Posterior cingulate gyrus (tissue), 11 donors: ENCODE measurements at regions of chr20 and their contacts with region 1.

Region 1: GRCh38 chr20:543369-544152 is at the start of gene CSNK2A1:
- DNase-seq: peak; percentile 91 to 99 (median 94)

Region 2: DNA sequence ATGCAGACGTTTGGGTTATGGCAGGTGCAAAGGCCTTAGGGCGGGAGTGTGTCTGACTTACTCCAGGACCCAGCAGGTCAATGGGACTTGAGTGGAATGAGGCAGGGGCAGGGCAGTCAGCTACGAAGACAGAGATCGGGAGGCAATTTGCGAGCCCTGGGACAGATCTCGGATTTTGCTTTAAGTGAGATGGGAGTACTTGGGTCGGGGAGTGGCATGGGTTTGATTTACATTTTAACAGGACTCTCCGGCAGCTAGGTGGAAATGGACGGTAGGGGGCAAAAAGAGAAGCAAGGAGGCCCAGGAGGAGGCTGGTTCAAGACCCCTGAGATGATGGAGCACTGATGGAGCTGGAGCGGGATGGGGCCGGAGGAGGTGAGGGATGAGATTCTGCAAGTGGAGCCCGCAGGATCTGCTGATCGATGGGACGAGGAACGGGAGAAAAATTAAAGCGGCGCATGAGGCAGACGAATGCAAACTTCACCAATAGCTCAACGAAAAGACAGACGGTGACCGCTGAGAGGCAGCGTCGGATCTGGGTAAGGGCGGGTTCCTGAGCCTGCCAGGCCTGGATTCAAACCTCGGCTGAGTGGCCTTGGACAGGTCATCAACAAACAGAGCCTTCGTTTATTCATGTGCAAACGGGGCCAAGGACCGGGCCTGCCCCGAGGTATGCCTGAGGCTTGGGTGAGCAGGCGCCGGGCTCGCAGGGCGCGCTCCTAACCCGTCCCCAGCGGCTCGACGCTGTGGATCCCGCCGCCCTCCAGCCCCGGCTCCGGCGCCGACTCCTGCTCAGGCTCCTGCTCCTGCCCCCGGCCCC is 136.2 kb before region 1 on chr20:
- intact Hi-C with region 1: loop called (anchors 5 kb)
- DNase-seq: peak; percentile 44 to 96 (median 70)

Region 3: DNA sequence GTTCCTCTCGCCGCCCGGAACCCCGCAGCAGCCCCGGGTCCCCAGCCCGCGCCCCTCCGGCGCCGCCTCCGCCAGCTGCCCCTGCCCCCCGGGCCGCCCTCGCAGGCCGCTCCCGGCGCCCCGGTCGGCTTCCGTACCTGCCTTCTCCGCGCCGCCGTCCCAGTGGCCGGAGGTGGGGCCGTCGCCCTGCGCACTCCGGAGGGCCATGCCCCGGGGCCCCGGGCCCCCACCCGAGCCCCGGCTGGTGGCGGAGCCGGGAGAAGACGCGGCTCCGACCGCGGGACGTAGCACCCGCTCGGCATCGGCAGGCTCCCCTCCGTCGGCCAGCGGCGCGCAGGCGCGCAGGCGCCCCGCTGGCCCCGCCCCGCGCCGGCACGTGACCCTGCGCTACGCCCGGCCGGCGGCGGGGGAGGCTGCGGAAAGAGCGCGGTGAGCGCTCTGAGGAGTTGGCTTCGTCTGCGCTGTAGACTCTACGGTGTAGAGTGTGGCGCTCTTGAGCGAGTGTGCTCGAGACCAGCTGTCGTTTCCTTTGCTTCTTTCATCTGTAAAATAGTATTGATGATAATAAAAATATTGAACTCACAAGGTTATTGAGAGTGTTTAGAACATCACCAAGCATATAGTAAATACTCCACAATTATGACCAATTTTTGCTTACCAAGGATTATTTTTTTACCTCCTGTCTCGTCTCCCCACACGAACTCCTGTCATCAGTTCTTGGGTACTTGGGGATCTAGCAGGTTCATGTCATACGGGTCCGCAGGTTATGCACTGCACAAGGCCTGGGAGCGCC is 81.2 kb before region 1 on chr20 and contains the start of gene TBC1D20:
- intact Hi-C with region 1: loop called (anchors 1 kb)
- DNase-seq: peak; percentile 68 to 98 (median 82)